Activated CD4-positive, alpha-beta T cell treated with anti-CD3 and anti-CD28 coated beads, Interleukin-2, amount 10 ng/mL, durations not matched to agents 7 days and 5 days (primary cell): ENCODE measurements at regions of chr17 and their contacts with region 1.

Region 1: DNA sequence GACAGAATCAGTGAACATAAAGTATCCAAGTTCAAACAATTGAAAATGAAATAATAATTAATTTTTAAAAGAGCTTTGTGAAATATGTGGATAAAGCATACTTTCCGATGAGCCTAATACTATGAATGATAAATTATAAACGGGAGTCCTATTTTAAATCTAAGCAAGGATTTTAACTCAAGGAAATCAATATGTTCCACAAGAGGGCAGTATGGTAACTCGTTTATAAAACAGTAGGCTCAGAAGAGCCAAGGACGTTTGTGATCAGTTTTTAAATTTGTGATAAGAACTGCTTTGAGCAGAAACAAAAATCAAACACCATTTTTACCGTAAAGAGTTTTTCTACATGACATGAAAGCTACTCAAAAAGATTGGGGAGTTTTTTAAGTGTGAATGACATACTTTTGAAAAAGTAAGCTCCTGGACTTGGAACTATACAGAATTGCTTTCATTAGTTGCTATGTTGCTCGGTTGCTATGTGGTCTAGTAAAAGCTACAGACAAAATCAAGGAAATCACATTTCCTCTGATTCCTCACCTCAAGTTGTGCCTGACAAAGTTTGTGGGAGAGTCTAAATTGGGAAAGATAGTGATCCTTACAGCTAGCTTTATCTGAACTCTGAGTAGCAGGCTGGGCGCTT is 11.8 kb upstream of the TEKT1 start:
- DNase-seq: no peak
- H3K4me3 Mint-ChIP-seq: no peak overlapping the region
- H3K27ac Mint-ChIP-seq: no peak overlapping the region
- H3K4me1 Mint-ChIP-seq: peaks cover 13% of the 10 kb centered on the region
- H3K27me3 Mint-ChIP-seq: peaks cover 63% of the 10 kb centered on the region

Region 2: DNA sequence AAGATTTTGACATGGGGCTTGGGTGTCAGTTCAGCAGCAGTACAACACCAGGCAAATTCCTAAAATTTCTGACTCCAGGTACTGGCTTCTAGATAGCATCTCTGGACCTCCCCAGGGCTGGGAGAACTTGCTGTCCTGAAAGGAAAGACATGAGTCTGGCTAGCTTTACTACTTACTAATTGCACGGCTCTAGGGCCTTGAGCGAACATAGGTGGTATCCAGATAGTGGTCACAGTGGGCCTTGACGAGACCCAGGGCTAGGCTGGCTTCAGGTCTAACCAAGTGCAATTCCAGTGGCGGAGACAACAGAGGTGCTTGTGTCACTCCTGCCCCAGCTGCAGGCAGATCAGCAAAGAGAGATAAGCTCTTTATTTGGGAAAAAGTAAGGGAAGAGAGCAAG is 113.8 kb before region 1 on chr17:
- CTCF ChIA-PET with region 1: no interaction called
- POLR2A ChIA-PET with region 1: no interaction called
- DNase-seq: no peak
- H3K4me3 Mint-ChIP-seq: no peak overlapping the region
- H3K27ac Mint-ChIP-seq: no peak overlapping the region
- H3K4me1 Mint-ChIP-seq: no peaks in the 10 kb centered on the region
- H3K27me3 Mint-ChIP-seq: peaks cover 27% of the 10 kb centered on the region

Region 3: DNA sequence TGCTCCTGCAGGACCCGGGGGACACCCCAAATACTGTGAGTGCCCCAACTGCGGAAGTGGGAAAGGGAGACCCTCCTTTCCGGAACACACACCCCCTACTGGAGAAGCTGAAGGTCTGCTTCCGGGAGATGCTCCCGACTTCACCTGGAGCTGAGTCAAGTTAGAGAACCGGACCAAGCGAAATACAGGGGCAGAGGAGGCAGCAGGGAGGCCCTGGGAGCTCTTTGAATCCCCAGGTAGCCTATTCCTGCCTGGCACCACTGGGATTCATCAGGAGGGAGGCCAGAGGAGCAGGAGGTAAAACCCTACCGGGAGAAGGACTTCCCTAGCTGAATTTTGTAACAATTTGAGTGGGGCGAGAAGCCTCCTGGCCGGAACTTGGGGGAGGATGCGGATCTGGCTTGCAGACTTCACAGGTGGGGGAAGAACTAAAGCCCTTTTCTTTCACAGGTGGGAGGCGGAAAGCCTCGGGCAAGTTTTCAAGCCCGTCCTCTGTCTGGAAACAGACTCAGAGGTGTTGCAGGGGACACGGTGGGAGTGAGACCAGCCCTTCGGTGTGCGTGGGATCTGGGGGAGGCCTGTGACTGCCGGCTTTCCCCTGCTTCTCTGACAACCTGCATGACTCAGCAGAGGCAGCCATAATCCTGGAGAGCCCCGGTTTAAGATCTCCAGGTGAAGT is 10.5 kb after region 1 on chr17:
- CTCF ChIA-PET with region 1: interaction called, 11 read pairs
- POLR2A ChIA-PET with region 1: no interaction called
- DNase-seq: peak; percentile 10
- H3K4me3 Mint-ChIP-seq: peak overlapping the region; percentile 67
- H3K27ac Mint-ChIP-seq: peak overlapping the region; percentile 50
- H3K4me1 Mint-ChIP-seq: peaks cover 16% of the 10 kb centered on the region
- H3K27me3 Mint-ChIP-seq: peaks cover 8% of the 10 kb centered on the region